ENCODE measurements at regions of chr17 and their contacts with region 1.

Region 1: GRCh38 chr17:34241062-34241461 is 14.0 kb upstream of the CCL2 start:
- DNase-seq: peak in 2 of 3 donors; percentile 51 to 83
- H3K4me3 ChIP-seq: peak overlapping the region in 1 of 3 experiments; percentile 13
- H3K4me3 Mint-ChIP-seq: no peak overlapping the region
- H3K27ac ChIP-seq: peak overlapping the region; percentile 49 to 94
- H3K27ac Mint-ChIP-seq: peak overlapping the region in 6 of 7 donors; percentile 66 to 94 (median 86)
- H3K4me1 ChIP-seq: peaks cover 89 to 90% of the 10 kb centered on the region in 2 donors
- H3K4me1 Mint-ChIP-seq: peaks cover 34% of the 10 kb centered on the region
- H3K27me3 ChIP-seq: no peaks in the 10 kb centered on the region
- H3K27me3 Mint-ChIP-seq: peaks cover 0 to 5% (median 2%) of the 10 kb centered on the region in 3 donors
- CTCF ChIP-seq: no peak

Region 2: GRCh38 chr17:34068506-34069035 is 172.5 kb before region 1 on chr17:
- intact Hi-C with region 1: no loop called
- DNase-seq: no peak
- H3K4me3 ChIP-seq: no peak overlapping the region
- H3K4me3 Mint-ChIP-seq: no peak overlapping the region
- H3K27ac ChIP-seq: no peak overlapping the region
- H3K27ac Mint-ChIP-seq: no peak overlapping the region
- H3K4me1 ChIP-seq: no peaks in the 10 kb centered on the region
- H3K4me1 Mint-ChIP-seq: no peaks in the 10 kb centered on the region
- H3K27me3 ChIP-seq: no peaks in the 10 kb centered on the region
- H3K27me3 Mint-ChIP-seq: peaks cover 2 to 3% (median 3%) of the 10 kb centered on the region in 3 donors
- CTCF ChIP-seq: no peak

Region 3: DNA sequence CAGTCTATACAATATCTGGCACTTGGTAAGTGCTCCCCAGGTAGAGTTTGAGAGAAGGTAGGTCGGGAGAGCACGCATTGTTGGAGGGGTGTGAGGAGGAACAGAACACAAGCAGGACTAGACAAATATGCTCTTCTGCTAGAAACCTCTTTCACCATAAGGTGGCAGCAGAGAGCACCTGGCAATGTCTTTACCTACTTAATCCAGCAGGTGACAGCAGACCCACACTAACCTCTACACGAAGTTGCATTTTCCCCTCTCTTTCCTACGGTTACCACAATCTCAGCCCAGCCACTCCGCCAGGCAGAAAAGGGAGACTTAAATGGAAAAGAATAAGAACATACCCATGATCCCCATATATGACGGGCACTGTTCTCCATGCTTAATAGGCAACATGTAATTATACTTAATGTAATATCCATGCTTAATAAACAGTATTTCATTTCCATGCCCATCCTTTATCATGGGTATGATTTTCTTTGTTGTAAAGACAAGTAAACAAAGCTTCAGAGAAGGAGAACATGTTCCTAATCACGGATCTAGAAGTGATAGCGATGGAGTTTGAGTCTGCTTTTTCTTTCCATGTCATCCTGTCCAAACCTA is 41.0 kb before region 1 on chr17:
- intact Hi-C with region 1: loop called in 1 of 2 experiments (anchors 5 kb)
- DNase-seq: peak; percentile 79 to 88 (median 87)
- H3K4me3 ChIP-seq: no peak overlapping the region
- H3K4me3 Mint-ChIP-seq: no peak overlapping the region
- H3K27ac ChIP-seq: peak overlapping the region in 1 of 2 donors; percentile 3
- H3K27ac Mint-ChIP-seq: peak overlapping the region in 4 of 7 donors; percentile 12 to 59 (median 36)
- H3K4me1 ChIP-seq: peaks cover 18 to 19% of the 10 kb centered on the region in 2 donors
- H3K4me1 Mint-ChIP-seq: peaks cover 23% of the 10 kb centered on the region
- H3K27me3 ChIP-seq: peaks cover 0 to 2% of the 10 kb centered on the region in 2 donors
- H3K27me3 Mint-ChIP-seq: peaks cover 0 to 11% (median 5%) of the 10 kb centered on the region in 3 donors
- CTCF ChIP-seq: peak; percentile 100

Region 4: DNA sequence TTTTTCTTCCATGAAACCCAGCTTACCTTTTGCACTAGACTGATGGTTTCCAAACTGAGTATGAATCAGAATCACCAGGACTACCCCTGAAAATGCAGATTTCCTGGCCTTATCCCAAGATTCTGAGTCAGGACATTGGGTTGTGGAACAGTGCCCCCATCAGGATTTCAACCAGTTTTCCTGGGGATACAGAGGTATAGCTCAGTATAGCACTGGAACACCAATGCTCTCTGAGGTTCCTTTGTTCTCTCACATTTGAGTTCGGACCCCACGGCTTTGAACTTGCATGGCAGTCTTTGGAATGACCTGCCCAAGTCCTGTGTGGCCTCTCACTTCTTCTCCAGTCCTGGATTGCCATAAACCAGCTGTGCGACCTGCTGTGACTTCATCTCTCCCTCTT is 65.4 kb after region 1 on chr17:
- intact Hi-C with region 1: loop called in 1 of 2 experiments (anchors 5 kb)
- DNase-seq: peak in 1 of 3 donors; percentile 63
- H3K4me3 ChIP-seq: peak overlapping the region in 1 of 3 experiments; percentile 34
- H3K4me3 Mint-ChIP-seq: no peak overlapping the region
- H3K27ac ChIP-seq: peak overlapping the region in 1 of 2 donors; percentile 77
- H3K27ac Mint-ChIP-seq: peak overlapping the region; percentile 80 to 94 (median 90)
- H3K4me1 ChIP-seq: peaks cover 49 to 54% of the 10 kb centered on the region in 2 donors
- H3K4me1 Mint-ChIP-seq: peaks cover 59% of the 10 kb centered on the region
- H3K27me3 ChIP-seq: no peaks in the 10 kb centered on the region
- H3K27me3 Mint-ChIP-seq: peaks cover 0 to 2% (median 0%) of the 10 kb centered on the region in 3 donors
- CTCF ChIP-seq: no peak

Region 5: GRCh38 chr17:34665819-34666763 is 425.0 kb after region 1 on chr17:
- intact Hi-C with region 1: no loop called
- DNase-seq: no peak
- H3K4me3 ChIP-seq: no peak overlapping the region
- H3K4me3 Mint-ChIP-seq: no peak overlapping the region
- H3K27ac ChIP-seq: no peak overlapping the region
- H3K27ac Mint-ChIP-seq: no peak overlapping the region
- H3K4me1 ChIP-seq: no peaks in the 10 kb centered on the region
- H3K4me1 Mint-ChIP-seq: no peaks in the 10 kb centered on the region
- H3K27me3 ChIP-seq: peaks cover 0 to 3% of the 10 kb centered on the region in 2 donors
- H3K27me3 Mint-ChIP-seq: peaks cover 12 to 20% (median 18%) of the 10 kb centered on the region in 3 donors
- CTCF ChIP-seq: no peak

Measured in CD14-positive monocyte (primary cell).